ENCODE measurements at regions of chr10 and their contacts with region 1.

Region 1: DNA sequence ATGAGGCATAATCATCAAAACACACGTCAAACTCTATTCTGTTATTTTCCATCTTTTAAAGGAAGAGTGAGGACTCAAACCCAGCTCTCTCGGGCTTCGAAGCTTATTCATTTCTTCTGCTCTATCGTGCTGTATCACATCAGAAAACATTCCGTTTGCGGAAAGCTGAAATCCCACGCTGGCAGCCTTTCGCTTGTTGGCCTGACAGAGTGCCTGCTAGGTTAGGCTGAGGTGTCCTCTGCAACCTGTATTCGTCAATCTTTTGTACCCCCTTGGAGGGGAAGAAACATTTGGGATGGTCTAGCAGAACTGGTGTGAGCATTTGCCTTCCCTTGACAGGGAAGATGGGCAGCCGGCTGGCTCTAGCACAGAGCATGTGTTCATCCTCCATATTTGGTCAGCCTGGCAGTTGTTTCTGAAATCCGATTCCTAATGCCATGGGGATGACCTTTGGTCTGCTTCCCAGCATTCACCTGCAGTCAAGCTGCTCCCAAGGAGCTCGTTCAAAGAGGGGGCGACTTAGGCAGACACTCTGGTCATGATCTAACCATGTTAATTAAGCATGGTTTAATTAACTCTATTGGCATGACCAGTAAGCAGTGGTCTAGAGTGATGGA is 55.2 kb downstream of the TACC2 start:
- DNase-seq: peak; percentile 89
- H3K4me3 ChIP-seq: peak overlapping the region in 3 of 4 donors; percentile 12 to 29 (median 21)
- H3K27ac ChIP-seq: peak overlapping the region; percentile 83 to 88 (median 86)
- H3K4me1 ChIP-seq: peaks cover 0 to 47% (median 42%) of the 10 kb centered on the region in 4 donors
- H3K27me3 ChIP-seq: no peaks in the 10 kb centered on the region
- CTCF ChIP-seq: no peak
- EP300 ChIP-seq: no peak
- POLR2A ChIP-seq: no peak

Region 2: DNA sequence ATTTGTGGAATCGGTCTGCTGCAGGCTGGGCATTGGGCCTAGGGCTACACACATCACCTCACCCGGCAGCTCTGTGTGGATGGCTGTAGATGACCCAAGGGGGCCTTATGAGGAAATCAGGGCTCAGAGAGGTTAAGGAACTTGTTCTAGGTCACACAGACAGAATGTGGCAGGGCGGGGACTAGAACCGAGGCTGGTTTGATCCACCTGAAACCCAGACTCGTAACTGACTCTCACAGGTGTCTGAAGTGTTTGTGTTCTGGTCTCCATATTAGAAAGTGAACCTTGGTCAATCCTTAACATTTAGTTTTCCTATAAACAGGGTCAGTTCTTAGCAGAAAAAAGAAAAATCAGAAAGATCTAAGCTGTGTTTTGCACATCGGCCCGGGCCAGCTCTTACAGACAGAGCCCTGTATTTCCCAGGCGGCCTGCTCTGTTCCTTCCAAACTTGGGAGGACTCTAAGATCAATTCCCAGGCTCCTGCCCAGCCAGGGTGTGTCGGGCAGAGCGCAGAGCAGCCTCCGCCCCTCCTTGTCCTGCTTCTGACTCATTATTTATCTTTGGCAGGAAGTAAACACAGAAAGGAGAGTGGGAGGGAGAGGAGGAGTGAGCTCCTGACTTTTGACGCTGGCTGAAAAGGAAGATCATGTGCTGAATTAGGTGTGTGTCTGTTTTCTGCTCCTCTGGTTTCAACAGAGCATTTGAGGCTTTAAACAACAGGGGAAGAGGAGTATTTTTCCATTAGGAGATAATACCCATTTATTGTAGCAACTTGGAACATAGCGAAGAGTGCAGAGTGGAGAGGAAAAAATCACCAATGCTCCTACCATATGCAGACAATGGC is 18.9 kb after region 1 on chr10:
- intact Hi-C with region 1: loop called (anchors 2 kb)
- DNase-seq: peak; percentile 97
- H3K4me3 ChIP-seq: no peak overlapping the region
- H3K27ac ChIP-seq: peak overlapping the region; percentile 86 to 93 (median 89)
- H3K4me1 ChIP-seq: peaks cover 3 to 26% (median 20%) of the 10 kb centered on the region in 4 donors
- H3K27me3 ChIP-seq: no peaks in the 10 kb centered on the region
- CTCF ChIP-seq: no peak
- EP300 ChIP-seq: peak; percentile 34 to 99 (median 88)
- POLR2A ChIP-seq: no peak